ENCODE measurements at regions of chr19 and their contacts with region 1.

Region 1: DNA sequence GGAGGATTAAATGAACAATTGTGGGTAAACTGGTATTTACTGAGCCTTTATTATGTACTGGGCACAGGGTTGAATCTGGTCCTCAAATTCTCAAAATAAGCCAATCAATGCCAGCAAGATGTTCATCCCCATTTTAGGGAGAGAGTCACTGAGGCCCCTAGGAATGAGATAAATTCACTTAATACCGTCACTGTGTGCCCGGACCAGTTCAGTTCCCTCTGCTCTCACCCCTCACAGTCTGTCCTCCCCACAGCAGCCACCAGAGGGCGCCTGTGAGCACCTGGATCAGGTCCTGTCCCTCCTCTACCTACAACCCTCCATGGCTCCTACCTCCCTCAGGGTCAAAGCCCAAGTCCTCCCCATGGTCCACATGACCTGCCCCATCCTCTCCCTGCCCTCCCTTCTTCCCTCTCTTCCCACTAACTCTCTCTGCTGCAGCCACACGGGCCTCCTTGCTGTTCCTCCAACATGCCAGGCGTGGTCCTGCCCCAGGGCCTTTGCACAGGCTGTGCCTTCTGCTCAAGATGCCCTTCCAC is 42.0 kb upstream of the NFIC start:
- DNase-seq: peak; percentile 61 to 81 (median 81)
- ATAC-seq: peak; percentile 31 to 53
- H3K4me3 ChIP-seq: no peak overlapping the region
- H3K27ac ChIP-seq: no peak overlapping the region
- H3K4me1 ChIP-seq: no peaks in the 10 kb centered on the region
- H3K27me3 ChIP-seq: no peaks in the 10 kb centered on the region

Region 2: DNA sequence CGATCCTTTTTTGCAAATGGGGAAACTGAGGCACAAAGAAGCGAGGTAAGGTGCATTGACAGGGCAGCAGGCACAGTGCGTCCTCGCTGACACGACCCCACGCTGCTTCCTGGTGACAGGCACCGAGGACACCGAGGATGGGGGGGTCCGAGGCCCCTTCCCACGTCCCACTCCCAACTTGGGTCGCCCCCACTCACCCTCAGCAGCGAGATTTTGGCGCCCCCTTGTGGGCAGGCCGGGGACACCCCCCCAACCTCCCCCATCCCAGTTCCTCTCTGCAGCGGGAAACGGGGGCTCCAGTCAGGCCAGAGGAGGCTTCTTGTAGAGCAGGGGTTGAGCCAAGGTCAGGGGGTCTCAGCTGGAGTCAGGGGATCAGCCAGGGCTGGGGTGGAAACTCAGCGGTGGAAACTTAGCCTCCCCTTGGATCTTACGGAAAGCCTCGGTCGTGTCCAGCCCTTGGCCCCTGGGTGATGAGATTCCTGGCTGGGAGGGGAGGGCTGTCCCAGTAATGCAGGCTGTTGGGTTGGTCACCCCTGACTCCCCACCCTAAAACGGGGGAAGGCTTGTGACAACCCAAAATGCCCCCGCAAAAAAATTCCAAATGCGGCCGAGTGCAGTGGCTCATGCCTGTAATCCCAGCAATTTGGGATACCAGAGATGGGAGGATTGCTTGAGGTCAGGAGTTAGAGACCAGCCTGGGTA is 147.7 kb after region 1 on chr19:
- intact Hi-C with region 1: loop called (anchors 2 to 5 kb)
- DNase-seq: peak; percentile 51 to 81 (median 74)
- ATAC-seq: peak; percentile 45 to 61
- H3K4me3 ChIP-seq: no peak overlapping the region
- H3K27ac ChIP-seq: no peak overlapping the region
- H3K4me1 ChIP-seq: no peaks in the 10 kb centered on the region
- H3K27me3 ChIP-seq: no peaks in the 10 kb centered on the region

Measured in right cardiac atrium (tissue), 5 donors.